ENCODE measurements at regions of chr11 and their contacts with region 1.

Region 1: DNA sequence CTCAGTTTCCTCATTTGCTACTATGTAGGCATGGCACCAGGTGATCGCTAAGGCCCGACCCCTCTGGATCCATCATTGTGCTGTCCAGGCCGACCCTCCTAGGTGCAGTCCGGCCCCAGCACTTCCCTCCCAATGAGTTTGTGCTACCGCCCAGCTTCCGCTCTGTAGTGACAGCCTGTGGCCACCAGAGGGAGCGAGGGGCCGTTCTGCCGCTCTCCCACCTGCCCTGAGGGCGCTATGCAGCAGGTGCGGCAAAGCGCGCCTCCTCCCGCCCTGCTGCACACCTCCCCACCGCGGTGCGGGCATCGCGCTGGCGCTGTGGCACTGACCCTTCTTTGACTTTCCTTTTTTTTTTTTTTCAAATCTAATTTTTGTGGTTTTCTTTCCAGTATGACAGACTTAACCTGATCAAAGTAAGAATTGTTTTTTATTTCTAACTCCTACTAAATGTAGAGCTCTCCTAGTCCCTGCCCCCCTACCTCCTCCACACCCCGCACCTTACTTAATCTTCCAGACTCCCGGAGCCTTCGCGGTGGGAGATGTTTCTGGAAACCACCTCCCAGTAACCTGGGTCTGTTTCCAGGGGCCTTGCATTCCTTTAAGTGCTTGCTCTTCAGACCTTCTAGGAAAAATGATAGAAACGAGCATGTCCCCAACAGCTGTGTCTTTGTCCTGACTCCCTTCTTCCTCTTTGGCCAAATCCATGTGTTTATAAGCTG is 73.7 kb downstream of the SCN3B start:
- DNase-seq: peak; percentile 65
- H3K4me3 ChIP-seq: no peak overlapping the region
- H3K27ac ChIP-seq: no peak overlapping the region
- H3K4me1 ChIP-seq: peaks cover 4% of the 10 kb centered on the region
- H3K27me3 ChIP-seq: no peaks in the 10 kb centered on the region
- CTCF ChIP-seq: peak; percentile 99

Region 2: DNA sequence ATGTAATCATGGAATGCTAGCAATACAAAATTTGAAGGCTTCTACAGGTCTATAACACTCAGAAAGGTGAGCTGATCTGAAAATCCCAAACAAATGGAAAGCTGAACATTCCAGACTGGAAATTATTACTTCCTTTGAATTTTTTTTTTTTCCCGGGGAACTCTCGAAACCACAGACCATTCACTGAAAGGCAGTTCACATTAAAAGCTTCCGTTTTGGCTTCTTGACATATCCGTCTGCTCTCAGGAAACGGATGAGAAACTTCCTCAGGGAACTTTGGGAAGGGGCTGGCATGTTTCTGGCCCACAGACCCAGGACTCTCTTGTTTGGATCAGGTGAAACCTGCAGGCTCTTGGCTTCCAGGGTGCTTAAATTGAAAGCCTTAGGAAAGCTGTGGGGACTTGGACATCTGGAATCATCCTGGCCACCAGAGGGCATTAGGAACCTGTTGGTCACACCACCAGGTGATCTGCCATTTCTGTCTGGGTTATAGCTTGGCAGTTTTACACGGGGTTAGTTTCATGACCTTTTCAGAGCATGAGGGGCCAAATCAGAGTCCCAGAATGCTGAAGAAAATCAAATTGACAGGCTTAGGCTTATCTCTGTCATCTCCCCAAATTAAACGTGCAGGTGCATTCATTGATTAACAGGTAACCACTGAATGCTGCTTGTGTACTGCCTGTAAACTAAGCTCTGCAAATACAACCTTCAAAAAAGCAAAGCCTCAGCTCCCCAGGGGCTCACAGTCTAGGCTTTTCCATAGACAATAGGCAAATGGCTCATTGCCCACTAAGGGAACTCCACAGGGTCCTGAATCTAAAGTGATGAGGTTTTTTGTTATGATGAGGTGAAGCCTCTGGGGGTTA is 173.4 kb before region 1 on chr11:
- CTCF ChIA-PET with region 1: no interaction called
- POLR2A ChIA-PET with region 1: no interaction called
- intact Hi-C with region 1: loop called (anchors 5 kb)
- DNase-seq: peak; percentile 70
- H3K4me3 ChIP-seq: no peak overlapping the region
- H3K27ac ChIP-seq: no peak overlapping the region
- H3K4me1 ChIP-seq: peaks cover 15% of the 10 kb centered on the region
- H3K27me3 ChIP-seq: no peaks in the 10 kb centered on the region
- CTCF ChIP-seq: peak; percentile 79

Region 3: GRCh38 chr11:123707606-123708205 is 127.0 kb after region 1 on chr11:
- CTCF ChIA-PET with region 1: interaction called, 6 read pairs
- POLR2A ChIA-PET with region 1: no interaction called
- intact Hi-C with region 1: loop called (anchors 1 kb)
- DNase-seq: peak; percentile 87
- H3K4me3 ChIP-seq: no peak overlapping the region
- H3K27ac ChIP-seq: no peak overlapping the region
- H3K4me1 ChIP-seq: no peaks in the 10 kb centered on the region
- H3K27me3 ChIP-seq: no peaks in the 10 kb centered on the region
- CTCF ChIP-seq: peak; percentile 96

Measured in A673 (cell line).